AG04450 (cell line): ENCODE measurements at regions of chr14 and their contacts with region 1.

Region 1: GRCh38 chr14:36941783-36942521 is 230.5 kb downstream of the SLC25A21 start:
- DNase-seq: no peak
- H3K4me3 ChIP-seq: no peak overlapping the region
- H3K27ac ChIP-seq: no peak overlapping the region
- H3K27me3 ChIP-seq: no peaks in the 10 kb centered on the region
- CTCF ChIP-seq: peak; percentile 99

Region 2: GRCh38 chr14:36647824-36648753 is 293.9 kb before region 1 on chr14:
- CTCF ChIA-PET with region 1: interaction called, 31 read pairs
- POLR2A ChIA-PET with region 1: no interaction called
- DNase-seq: no peak
- H3K4me3 ChIP-seq: peak overlapping the region; percentile 43
- H3K27ac ChIP-seq: no peak overlapping the region
- H3K27me3 ChIP-seq: peaks cover 53% of the 10 kb centered on the region
- CTCF ChIP-seq: peak; percentile 56

Region 3: GRCh38 chr14:36857842-36858445 is 84.0 kb before region 1 on chr14:
- CTCF ChIA-PET with region 1: no interaction called
- POLR2A ChIA-PET with region 1: no interaction called
- DNase-seq: no peak
- H3K4me3 ChIP-seq: no peak overlapping the region
- H3K27ac ChIP-seq: no peak overlapping the region
- H3K27me3 ChIP-seq: no peaks in the 10 kb centered on the region
- CTCF ChIP-seq: no peak

Region 4: GRCh38 chr14:36928432-36928831 is 13.5 kb before region 1 on chr14:
- CTCF ChIA-PET with region 1: interaction called, 23 read pairs
- POLR2A ChIA-PET with region 1: no interaction called
- DNase-seq: no peak
- H3K4me3 ChIP-seq: no peak overlapping the region
- H3K27ac ChIP-seq: no peak overlapping the region
- H3K27me3 ChIP-seq: peaks cover 3% of the 10 kb centered on the region
- CTCF ChIP-seq: no peak

Region 5: DNA sequence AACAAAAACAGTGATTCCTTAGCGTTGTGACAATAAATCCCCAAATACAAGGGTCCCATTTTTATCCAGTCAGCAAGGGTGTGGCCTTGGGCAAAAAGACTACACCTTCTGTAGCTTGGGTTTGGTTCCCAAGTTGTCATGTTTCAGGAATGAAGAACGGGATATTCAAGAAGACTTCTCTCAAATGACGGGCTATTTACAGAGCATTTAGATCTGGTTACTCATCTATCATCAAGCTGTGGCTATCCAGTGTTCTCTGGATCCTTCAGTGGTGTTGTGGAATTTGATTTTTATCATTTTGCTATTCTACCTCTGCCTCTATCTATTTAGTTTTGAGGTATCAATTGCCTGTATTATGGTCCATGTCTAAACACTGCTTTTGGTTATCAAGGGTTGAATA is 10.8 kb after region 1 on chr14:
- CTCF ChIA-PET with region 1: interaction called, 23 read pairs
- POLR2A ChIA-PET with region 1: no interaction called
- DNase-seq: no peak
- H3K4me3 ChIP-seq: no peak overlapping the region
- H3K27ac ChIP-seq: no peak overlapping the region
- H3K27me3 ChIP-seq: no peaks in the 10 kb centered on the region
- CTCF ChIP-seq: no peak

Region 6: GRCh38 chr14:37048666-37049071 is 106.7 kb after region 1 on chr14:
- CTCF ChIA-PET with region 1: no interaction called
- POLR2A ChIA-PET with region 1: no interaction called
- DNase-seq: no peak
- H3K4me3 ChIP-seq: no peak overlapping the region
- H3K27ac ChIP-seq: no peak overlapping the region
- H3K27me3 ChIP-seq: no peaks in the 10 kb centered on the region
- CTCF ChIP-seq: no peak

Region 7: DNA sequence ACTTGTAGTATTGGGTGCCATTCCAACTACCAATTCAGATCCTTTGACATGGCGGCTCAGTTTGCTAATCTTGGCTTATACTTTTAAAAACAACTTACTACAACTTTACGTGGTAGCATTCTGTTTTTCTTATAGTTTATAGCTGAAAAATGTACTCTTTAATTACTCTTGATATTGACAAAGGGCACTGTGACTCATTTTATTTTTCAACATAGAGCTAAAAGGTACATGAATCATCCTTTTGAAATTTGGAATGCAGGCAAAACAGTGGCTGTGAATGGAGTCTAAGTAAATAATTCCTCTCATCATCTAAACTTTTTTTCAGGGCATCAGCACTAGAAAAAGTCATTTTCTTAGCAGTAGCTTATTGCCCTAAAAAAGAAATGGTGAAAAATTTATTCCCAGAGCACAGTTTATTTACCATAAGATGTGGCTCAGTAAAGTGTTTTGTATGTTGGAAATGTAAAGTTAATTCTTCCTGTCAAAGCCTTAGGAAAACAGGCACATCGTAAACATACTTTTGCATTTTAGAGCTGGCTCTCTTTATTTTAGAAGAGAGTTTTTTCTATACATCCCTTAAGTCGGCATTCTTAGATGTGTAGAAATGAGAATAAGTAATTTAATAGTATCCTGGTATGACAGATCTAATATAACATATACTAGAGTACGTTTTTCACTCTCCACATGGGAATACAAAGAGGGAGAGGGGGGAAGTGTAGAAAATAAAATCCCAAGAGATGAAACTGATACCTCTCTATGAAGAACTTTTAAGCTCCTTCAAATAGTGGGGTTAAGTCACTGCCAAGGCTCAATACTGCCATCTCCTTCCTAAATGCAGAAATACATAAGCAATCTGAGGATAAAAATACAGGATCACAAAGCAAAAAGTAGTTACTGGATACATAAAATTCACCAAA is 175.2 kb after region 1 on chr14:
- CTCF ChIA-PET with region 1: interaction called, 23 read pairs
- POLR2A ChIA-PET with region 1: no interaction called
- DNase-seq: peak; percentile 8
- H3K4me3 ChIP-seq: no peak overlapping the region
- H3K27ac ChIP-seq: no peak overlapping the region
- H3K27me3 ChIP-seq: no peaks in the 10 kb centered on the region
- CTCF ChIP-seq: peak; percentile 70